HCT116 (cell line): ENCODE measurements at regions of chr9 and their contacts with region 1.

Region 1: GRCh38 chr9:111298731-111299598 is 31.1 kb downstream of the OR2K2 start:
- DNase-seq: peak; percentile 46
- ATAC-seq: peak; percentile 83
- H3K4me3 ChIP-seq: no peak overlapping the region
- H3K27ac ChIP-seq: no peak overlapping the region
- H3K4me1 ChIP-seq: 0 out of 4 replicates have a peak, but pooled peaks cover 0 to 3% of the 10 kb centered on the region in 2 experiments
- H3K27me3 ChIP-seq: no peaks in the 10 kb centered on the region
- CTCF ChIP-seq: peak; percentile 59 to 88 (median 82)
- POLR2A ChIP-seq: no peak
- RAD21 ChIP-seq: peak; percentile 97

Region 2: GRCh38 chr9:110183208-110184145 is 1115.5 kb before region 1 on chr9:
- CTCF ChIA-PET with region 1: no interaction called
- POLR2A ChIA-PET with region 1: no interaction called
- RAD21 ChIA-PET with region 1: no interaction called
- intact Hi-C with region 1: loop called (anchors 10 kb)
- DNase-seq: peak; percentile 68
- ATAC-seq: peak; percentile 89
- H3K4me3 ChIP-seq: no peak overlapping the region
- H3K27ac ChIP-seq: no peak overlapping the region
- H3K4me1 ChIP-seq: peaks cover 0 to 26% of the 10 kb centered on the region in 2 experiments; a peak in 2 of 4 replicates
- H3K27me3 ChIP-seq: no peaks in the 10 kb centered on the region
- CTCF ChIP-seq: peak; percentile 74 to 84 (median 81)
- POLR2A ChIP-seq: no peak
- RAD21 ChIP-seq: peak; percentile 94

Region 3: DNA sequence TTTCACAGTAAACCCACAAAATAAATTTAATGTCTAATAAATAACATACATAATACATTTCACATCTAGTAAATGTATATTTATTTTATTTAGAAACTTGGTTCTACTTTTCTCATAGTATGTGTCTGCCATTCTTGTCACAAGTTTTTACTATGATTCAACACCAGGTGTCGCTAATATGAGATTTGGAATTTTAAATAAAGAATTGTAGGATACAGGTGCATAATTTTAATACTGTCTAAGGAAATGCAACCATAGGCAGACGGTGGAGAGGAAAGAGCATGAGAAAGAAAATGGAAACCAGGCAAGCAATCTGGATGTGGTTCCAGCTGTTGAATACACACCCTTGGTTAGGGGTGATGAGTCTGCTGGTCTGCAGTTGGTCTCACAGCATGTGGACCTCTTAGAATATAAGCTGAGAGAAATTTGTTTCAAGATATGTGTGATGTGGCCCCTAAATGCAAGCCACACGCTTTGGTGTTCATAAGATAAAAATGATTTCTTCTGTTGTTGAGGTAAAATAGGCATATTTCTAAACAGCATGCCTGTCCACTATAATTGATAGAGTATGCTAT is 846.7 kb before region 1 on chr9:
- CTCF ChIA-PET with region 1: no interaction called
- POLR2A ChIA-PET with region 1: no interaction called
- RAD21 ChIA-PET with region 1: no interaction called
- intact Hi-C with region 1: loop called (anchors 10 kb)
- DNase-seq: no peak
- ATAC-seq: peak; percentile 66; the same call in 1 of the 2 replicates
- H3K4me3 ChIP-seq: no peak overlapping the region
- H3K27ac ChIP-seq: no peak overlapping the region
- H3K4me1 ChIP-seq: no peaks in the 10 kb centered on the region
- H3K27me3 ChIP-seq: no peaks in the 10 kb centered on the region
- CTCF ChIP-seq: peak; percentile 34 to 57 (median 47); a peak in 3 of 6 replicates
- POLR2A ChIP-seq: no peak
- RAD21 ChIP-seq: peak; percentile 38

Region 4: DNA sequence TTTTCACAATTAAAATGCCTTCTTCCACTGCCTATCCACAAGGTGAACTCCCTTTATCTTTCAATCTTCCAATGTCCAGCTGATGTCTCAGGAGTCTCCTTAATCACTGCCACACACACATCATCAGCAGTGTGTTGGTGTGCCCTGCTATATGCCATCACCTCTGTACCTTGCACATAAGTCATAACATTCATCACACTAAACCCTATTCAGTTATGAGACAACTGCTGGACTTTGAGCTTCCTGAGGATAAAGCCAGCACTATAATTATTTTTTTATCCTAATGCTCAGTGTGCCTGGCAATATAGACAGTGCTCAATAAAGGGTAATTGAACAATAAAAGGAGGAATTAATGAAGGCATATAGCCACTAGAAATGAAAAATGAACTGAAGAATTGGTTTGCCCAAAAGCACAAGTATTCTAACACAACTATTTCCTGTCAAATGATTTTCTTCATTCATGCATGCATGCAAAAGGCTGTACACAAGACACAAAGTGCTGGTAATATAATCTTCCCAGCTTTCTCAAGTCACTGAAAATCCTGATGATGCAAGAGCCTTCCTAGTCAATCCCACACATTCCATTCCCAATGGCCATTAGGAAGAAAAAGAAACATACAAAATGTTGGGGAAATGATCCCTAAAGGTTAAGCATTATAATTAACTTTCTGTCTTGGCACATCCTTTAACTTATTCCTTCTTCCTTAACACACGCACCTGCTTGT is 293.1 kb before region 1 on chr9:
- CTCF ChIA-PET with region 1: no interaction called
- POLR2A ChIA-PET with region 1: no interaction called
- RAD21 ChIA-PET with region 1: no interaction called
- intact Hi-C with region 1: no loop called
- DNase-seq: no peak
- ATAC-seq: no peak
- H3K4me3 ChIP-seq: no peak overlapping the region
- H3K27ac ChIP-seq: no peak overlapping the region
- H3K4me1 ChIP-seq: no peaks in the 10 kb centered on the region
- H3K27me3 ChIP-seq: no peaks in the 10 kb centered on the region
- CTCF ChIP-seq: no peak
- POLR2A ChIP-seq: no peak
- RAD21 ChIP-seq: no peak

Region 5: GRCh38 chr9:111037381-111038305 is 261.3 kb before region 1 on chr9:
- CTCF ChIA-PET with region 1: no interaction called
- POLR2A ChIA-PET with region 1: no interaction called
- RAD21 ChIA-PET with region 1: no interaction called
- intact Hi-C with region 1: loop called (anchors 2 kb)
- DNase-seq: peak; percentile 7
- ATAC-seq: peak; percentile 65
- H3K4me3 ChIP-seq: peak overlapping the region; percentile 67 to 85
- H3K27ac ChIP-seq: peak overlapping the region; percentile 75; the same call in 1 of the 2 replicates
- H3K4me1 ChIP-seq: peaks cover 7 to 23% of the 10 kb centered on the region in 2 experiments; a peak in 3 of 4 replicates
- H3K27me3 ChIP-seq: no peaks in the 10 kb centered on the region
- CTCF ChIP-seq: 0 out of 6 replicates have a peak, but pooled peaks of 1 of the 3 experiments have one; percentile 11
- POLR2A ChIP-seq: no peak
- RAD21 ChIP-seq: no peak

Region 6: GRCh38 chr9:111131211-111131610 is 167.8 kb before region 1 on chr9:
- CTCF ChIA-PET with region 1: no interaction called
- POLR2A ChIA-PET with region 1: no interaction called
- RAD21 ChIA-PET with region 1: no interaction called
- intact Hi-C with region 1: no loop called
- DNase-seq: no peak
- ATAC-seq: no peak
- H3K4me3 ChIP-seq: no peak overlapping the region
- H3K27ac ChIP-seq: no peak overlapping the region
- H3K4me1 ChIP-seq: no peaks in the 10 kb centered on the region
- H3K27me3 ChIP-seq: no peaks in the 10 kb centered on the region
- CTCF ChIP-seq: no peak
- POLR2A ChIP-seq: no peak
- RAD21 ChIP-seq: no peak